ENCODE measurements at regions of chr12 and their contacts with region 1.

Region 1: DNA sequence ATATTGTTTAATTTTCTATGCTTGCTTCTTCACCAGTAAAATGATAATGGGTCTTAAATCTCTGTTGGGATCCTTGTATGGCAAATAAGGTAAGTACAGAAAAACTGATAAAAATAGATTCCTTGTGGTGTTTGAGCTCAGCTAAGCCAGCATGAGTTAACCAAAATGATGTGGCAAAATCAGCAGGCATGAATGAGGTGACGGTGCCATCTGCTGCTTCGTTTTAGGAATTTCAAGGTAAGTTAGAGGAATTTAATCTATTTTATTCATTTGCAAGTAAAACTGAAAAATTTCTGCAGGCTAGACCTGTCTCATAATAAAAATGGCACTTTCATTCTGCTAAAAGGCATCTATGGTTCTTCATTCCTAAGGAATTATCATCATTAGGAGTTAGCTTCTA is 10.0 kb upstream of the CLEC7A start:
- DNase-seq: peak; percentile 63
- ATAC-seq: no peak
- H3K4me3 ChIP-seq: no peak overlapping the region
- H3K4me3 Mint-ChIP-seq: no peak overlapping the region
- H3K27ac ChIP-seq: no peak overlapping the region
- H3K27ac Mint-ChIP-seq: no peak overlapping the region
- H3K4me1 ChIP-seq: no peaks in the 10 kb centered on the region
- H3K4me1 Mint-ChIP-seq: peaks cover 2% of the 10 kb centered on the region
- H3K27me3 ChIP-seq: peaks cover 0 to 18% (median 9%) of the 10 kb centered on the region in 4 experiments
- H3K27me3 Mint-ChIP-seq: peaks cover 38% of the 10 kb centered on the region
- CTCF ChIP-seq: peak; percentile 62

Region 2: DNA sequence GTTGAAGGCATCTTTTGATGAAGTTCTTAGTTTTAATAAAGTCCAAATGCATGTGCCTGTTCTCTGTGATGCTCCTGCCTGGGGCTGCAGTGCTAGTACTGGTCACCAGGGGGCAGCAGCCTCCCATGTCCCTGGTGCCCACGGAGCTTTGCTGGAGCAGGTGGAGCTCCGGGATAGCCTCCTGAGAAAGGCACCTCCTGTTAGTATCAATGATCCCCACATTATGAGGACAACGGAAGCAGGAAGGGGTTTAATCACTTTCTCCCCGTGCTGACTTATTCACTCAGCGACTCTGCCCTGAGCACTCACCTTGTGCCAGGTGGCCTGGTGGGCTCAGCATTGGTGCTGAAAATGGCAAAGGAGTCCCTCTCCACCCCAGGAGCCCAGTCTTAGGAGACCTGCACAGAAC is 808.8 kb before region 1 on chr12:
- CTCF ChIA-PET with region 1: interaction called, 4 read pairs
- POLR2A ChIA-PET with region 1: no interaction called
- intact Hi-C with region 1: loop called (anchors 5 kb)
- DNase-seq: peak; percentile 74
- ATAC-seq: peak; percentile 84
- H3K4me3 ChIP-seq: no peak overlapping the region
- H3K4me3 Mint-ChIP-seq: no peak overlapping the region
- H3K27ac ChIP-seq: no peak overlapping the region
- H3K27ac Mint-ChIP-seq: no peak overlapping the region
- H3K4me1 ChIP-seq: peaks cover 0 to 12% of the 10 kb centered on the region in 2 donors
- H3K4me1 Mint-ChIP-seq: peaks cover 7% of the 10 kb centered on the region
- H3K27me3 ChIP-seq: peaks cover 0 to 3% (median 0%) of the 10 kb centered on the region in 4 experiments
- H3K27me3 Mint-ChIP-seq: no peaks in the 10 kb centered on the region
- CTCF ChIP-seq: peak; percentile 98

Region 3: GRCh38 chr12:9813821-9814809 is 325.9 kb before region 1 on chr12:
- CTCF ChIA-PET with region 1: interaction called, 13 read pairs
- POLR2A ChIA-PET with region 1: no interaction called
- intact Hi-C with region 1: loop called (anchors 1 kb)
- DNase-seq: peak; percentile 88
- ATAC-seq: peak; percentile 97
- H3K4me3 ChIP-seq: peak overlapping the region in 4 of 5 experiments; percentile 33 to 63 (median 48)
- H3K4me3 Mint-ChIP-seq: peak overlapping the region; percentile 77
- H3K27ac ChIP-seq: no peak overlapping the region
- H3K27ac Mint-ChIP-seq: no peak overlapping the region
- H3K4me1 ChIP-seq: peaks cover 10 to 23% of the 10 kb centered on the region in 2 donors
- H3K4me1 Mint-ChIP-seq: peaks cover 21% of the 10 kb centered on the region
- H3K27me3 ChIP-seq: peaks cover 0 to 9% (median 0%) of the 10 kb centered on the region in 4 experiments
- H3K27me3 Mint-ChIP-seq: peaks cover 23% of the 10 kb centered on the region
- CTCF ChIP-seq: peak; percentile 93

Region 4: DNA sequence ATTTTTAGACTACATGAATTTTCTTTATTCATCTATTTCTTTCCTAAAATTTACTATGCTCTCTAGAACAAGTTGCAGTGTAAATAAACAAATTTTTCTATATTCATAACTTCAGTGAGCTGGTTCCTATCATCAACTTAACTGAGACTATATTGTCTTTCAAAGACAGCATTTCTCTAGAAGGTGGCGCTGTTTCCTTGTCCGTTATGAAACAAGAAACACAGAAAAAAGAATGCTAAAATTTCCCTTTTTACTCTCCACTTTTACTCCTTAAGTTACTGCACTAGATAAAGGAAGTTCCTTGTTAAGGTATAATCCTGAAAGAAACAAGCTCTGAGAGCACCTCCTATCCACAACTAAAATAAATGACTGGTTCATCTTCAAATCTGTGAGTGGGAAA is 199.6 kb before region 1 on chr12:
- CTCF ChIA-PET with region 1: interaction called, 17 read pairs
- POLR2A ChIA-PET with region 1: no interaction called
- intact Hi-C with region 1: loop called (anchors 1 kb)
- DNase-seq: peak; percentile 42
- ATAC-seq: no peak
- H3K4me3 ChIP-seq: no peak overlapping the region
- H3K4me3 Mint-ChIP-seq: no peak overlapping the region
- H3K27ac ChIP-seq: no peak overlapping the region
- H3K27ac Mint-ChIP-seq: no peak overlapping the region
- H3K4me1 ChIP-seq: peaks cover 11 to 24% of the 10 kb centered on the region in 2 donors
- H3K4me1 Mint-ChIP-seq: peaks cover 20% of the 10 kb centered on the region
- H3K27me3 ChIP-seq: peaks cover 0 to 7% (median 0%) of the 10 kb centered on the region in 4 experiments
- H3K27me3 Mint-ChIP-seq: peaks cover 22% of the 10 kb centered on the region
- CTCF ChIP-seq: peak; percentile 44

Region 5: DNA sequence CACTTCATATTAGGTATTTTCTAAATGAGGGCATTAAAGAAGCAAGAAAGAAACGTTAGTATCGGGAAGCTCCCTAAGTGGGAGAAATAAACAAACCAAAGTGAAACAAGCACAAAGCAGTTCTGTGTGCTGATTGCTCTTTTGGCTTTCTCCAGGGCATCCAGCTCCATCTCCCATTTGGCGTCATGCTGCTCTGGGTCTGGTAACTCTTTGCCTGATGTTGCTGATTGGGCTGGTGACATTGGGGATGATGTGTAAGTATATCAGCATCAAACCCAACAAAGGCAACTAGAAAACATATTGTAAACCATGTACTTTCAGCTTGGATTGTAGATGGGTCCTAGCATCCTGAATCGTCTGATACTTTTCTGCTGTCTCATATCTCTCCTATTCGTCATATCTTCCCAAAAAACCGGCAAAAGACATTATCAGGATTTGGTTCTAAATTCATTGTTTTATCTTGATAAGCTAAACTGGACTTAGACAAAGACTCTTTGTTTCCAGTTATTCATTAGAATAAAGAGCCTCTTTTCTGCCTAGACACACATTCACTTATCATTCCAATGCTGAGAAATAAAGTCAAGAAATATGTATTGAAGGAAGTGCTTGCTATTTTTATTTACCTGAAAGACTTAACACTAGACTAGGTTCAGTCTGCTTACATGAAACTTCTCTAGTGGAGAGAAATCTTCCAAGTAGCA is 127.2 kb before region 1 on chr12:
- CTCF ChIA-PET with region 1: interaction called, 12 read pairs
- POLR2A ChIA-PET with region 1: no interaction called
- intact Hi-C with region 1: no loop called
- DNase-seq: no peak
- ATAC-seq: no peak
- H3K4me3 ChIP-seq: no peak overlapping the region
- H3K4me3 Mint-ChIP-seq: no peak overlapping the region
- H3K27ac ChIP-seq: no peak overlapping the region
- H3K27ac Mint-ChIP-seq: no peak overlapping the region
- H3K4me1 ChIP-seq: no peaks in the 10 kb centered on the region
- H3K4me1 Mint-ChIP-seq: no peaks in the 10 kb centered on the region
- H3K27me3 ChIP-seq: peaks cover 0 to 5% (median 2%) of the 10 kb centered on the region in 4 experiments
- H3K27me3 Mint-ChIP-seq: peaks cover 47% of the 10 kb centered on the region
- CTCF ChIP-seq: no peak

Region 6: DNA sequence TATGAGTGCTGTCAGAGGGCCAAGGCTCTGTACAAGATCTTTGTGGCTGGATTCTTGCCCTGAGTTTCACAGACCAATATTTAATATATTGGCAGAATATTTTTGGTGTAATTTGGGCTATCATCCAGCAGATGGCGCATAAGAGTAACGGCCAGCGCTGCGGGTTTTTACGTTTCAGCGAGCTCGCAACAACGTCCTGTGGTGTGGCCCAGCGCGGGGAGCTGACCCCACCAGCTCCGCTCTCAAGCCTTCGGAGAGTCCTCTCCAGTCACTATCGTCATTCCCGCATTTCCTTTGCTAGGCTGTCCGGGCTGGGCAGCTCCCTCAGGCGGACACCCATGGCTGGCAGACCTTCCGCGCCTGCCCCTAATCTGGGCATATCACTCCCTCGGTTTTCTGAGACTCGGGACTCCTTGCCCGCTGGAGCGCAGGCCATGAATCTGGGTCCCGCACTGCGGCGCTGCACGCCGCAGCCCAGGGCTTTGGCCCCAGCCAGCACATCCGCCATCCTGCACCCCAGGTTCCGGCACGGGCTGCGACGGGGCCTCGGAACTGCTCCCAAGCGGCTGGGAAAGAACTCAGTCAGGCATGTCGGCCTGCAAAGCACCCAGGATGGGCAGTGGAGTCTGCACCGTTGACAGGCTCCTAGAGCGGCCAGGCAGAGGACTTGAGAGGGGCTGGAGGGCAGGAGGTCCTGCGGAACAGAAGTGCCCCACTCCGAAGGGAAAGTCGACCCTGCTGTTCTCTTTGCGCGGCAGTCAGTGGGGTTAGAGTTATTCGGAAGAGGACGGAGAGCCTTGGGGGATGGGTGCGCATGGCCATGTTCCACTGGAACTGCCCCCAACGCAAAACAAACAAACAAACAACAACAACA is 13.5 kb after region 1 on chr12:
- CTCF ChIA-PET with region 1: interaction called, 18 read pairs
- POLR2A ChIA-PET with region 1: no interaction called
- intact Hi-C with region 1: no loop called
- DNase-seq: peak; percentile 77
- ATAC-seq: peak; percentile 75
- H3K4me3 ChIP-seq: peak overlapping the region; percentile 32 to 79 (median 68)
- H3K4me3 Mint-ChIP-seq: peak overlapping the region; percentile 92
- H3K27ac ChIP-seq: no peak overlapping the region
- H3K27ac Mint-ChIP-seq: no peak overlapping the region
- H3K4me1 ChIP-seq: peaks cover 12 to 14% of the 10 kb centered on the region in 2 donors
- H3K4me1 Mint-ChIP-seq: peaks cover 17% of the 10 kb centered on the region
- H3K27me3 ChIP-seq: peaks cover 0 to 16% (median 12%) of the 10 kb centered on the region in 4 experiments
- H3K27me3 Mint-ChIP-seq: peaks cover 31% of the 10 kb centered on the region
- CTCF ChIP-seq: peak; percentile 95

Region 7: GRCh38 chr12:10243818-10244520 is 104.0 kb after region 1 on chr12:
- CTCF ChIA-PET with region 1: no interaction called
- POLR2A ChIA-PET with region 1: no interaction called
- intact Hi-C with region 1: no loop called
- DNase-seq: peak; percentile 19
- ATAC-seq: no peak
- H3K4me3 ChIP-seq: peak overlapping the region in 3 of 5 experiments; percentile 22 to 37 (median 34)
- H3K4me3 Mint-ChIP-seq: peak overlapping the region; percentile 68
- H3K27ac ChIP-seq: no peak overlapping the region
- H3K27ac Mint-ChIP-seq: no peak overlapping the region
- H3K4me1 ChIP-seq: peaks cover 8 to 10% of the 10 kb centered on the region in 2 donors
- H3K4me1 Mint-ChIP-seq: peaks cover 14% of the 10 kb centered on the region
- H3K27me3 ChIP-seq: peaks cover 0 to 16% (median 9%) of the 10 kb centered on the region in 4 experiments
- H3K27me3 Mint-ChIP-seq: peaks cover 23% of the 10 kb centered on the region
- CTCF ChIP-seq: no peak